ENCODE measurements at regions of chr18 and their contacts with region 1.

Region 1: DNA sequence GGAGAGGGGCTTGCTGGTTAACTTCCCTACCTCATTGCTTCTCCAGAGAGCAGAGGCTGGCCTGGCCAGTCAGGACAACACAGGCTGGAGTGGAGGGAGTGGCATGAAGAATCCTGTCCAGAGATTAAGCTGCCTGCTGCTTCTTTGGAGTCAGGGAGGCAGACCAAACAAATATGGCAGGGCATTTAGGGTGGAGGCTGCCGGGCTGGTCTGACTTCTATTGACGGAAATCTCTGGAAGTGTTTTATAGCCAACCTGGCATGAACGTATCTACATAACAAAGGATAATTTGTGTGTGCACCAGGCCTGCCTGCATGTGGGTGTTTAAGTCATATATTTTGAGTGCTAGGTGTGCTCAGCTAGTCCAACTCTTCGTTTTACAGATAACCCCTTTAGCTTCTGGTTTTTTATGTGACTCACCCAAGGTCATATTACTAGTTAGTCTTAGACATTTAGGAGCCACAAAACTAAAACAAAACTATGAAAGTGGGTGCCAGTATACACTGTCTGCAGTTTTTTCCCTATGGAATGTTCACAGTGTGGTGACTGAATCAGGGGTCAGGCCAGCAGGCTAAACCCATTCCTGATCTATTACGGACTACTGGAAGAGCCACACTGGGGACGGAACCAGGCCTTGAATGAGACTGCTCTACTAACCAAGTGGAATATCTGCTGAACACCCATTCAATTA is 5.5 kb downstream of the NPC1 start:
- DNase-seq: no peak
- ATAC-seq: no peak
- H3K4me3 ChIP-seq: no peak overlapping the region
- H3K4me3 Mint-ChIP-seq: no peak overlapping the region
- H3K27ac ChIP-seq: no peak overlapping the region
- H3K27ac Mint-ChIP-seq: no peak overlapping the region
- H3K4me1 ChIP-seq: peaks cover 48% of the 10 kb centered on the region
- H3K4me1 Mint-ChIP-seq: peaks cover 51% of the 10 kb centered on the region
- H3K27me3 ChIP-seq: no peaks in the 10 kb centered on the region
- H3K27me3 Mint-ChIP-seq: no peaks in the 10 kb centered on the region
- CTCF ChIP-seq: no peak

Region 2: GRCh38 chr18:23547846-23548245 is 33.0 kb before region 1 on chr18:
- CTCF ChIA-PET with region 1: interaction called, 5 read pairs
- POLR2A ChIA-PET with region 1: interaction called, 5 read pairs
- intact Hi-C with region 1: loop called in 1 of 2 experiments (anchors 5 kb)
- DNase-seq: no peak
- ATAC-seq: no peak
- H3K4me3 ChIP-seq: no peak overlapping the region
- H3K4me3 Mint-ChIP-seq: no peak overlapping the region
- H3K27ac ChIP-seq: no peak overlapping the region
- H3K27ac Mint-ChIP-seq: no peak overlapping the region
- H3K4me1 ChIP-seq: no peaks in the 10 kb centered on the region
- H3K4me1 Mint-ChIP-seq: no peaks in the 10 kb centered on the region
- H3K27me3 ChIP-seq: no peaks in the 10 kb centered on the region
- H3K27me3 Mint-ChIP-seq: no peaks in the 10 kb centered on the region
- CTCF ChIP-seq: no peak

Measured in CD4-positive, alpha-beta T cell (primary cell).